ENCODE measurements at regions of chr13 and their contacts with region 1.

Region 1: GRCh38 chr13:23752111-23753001 is 136.8 kb downstream of the MIPEP start:
- DNase-seq: no peak
- H3K4me3 ChIP-seq: no peak overlapping the region
- H3K27ac ChIP-seq: no peak overlapping the region
- H3K4me1 ChIP-seq: peaks cover 13% of the 10 kb centered on the region
- H3K27me3 ChIP-seq: no peaks in the 10 kb centered on the region
- CTCF ChIP-seq: no peak
- POLR2A ChIP-seq: no peak

Region 2: DNA sequence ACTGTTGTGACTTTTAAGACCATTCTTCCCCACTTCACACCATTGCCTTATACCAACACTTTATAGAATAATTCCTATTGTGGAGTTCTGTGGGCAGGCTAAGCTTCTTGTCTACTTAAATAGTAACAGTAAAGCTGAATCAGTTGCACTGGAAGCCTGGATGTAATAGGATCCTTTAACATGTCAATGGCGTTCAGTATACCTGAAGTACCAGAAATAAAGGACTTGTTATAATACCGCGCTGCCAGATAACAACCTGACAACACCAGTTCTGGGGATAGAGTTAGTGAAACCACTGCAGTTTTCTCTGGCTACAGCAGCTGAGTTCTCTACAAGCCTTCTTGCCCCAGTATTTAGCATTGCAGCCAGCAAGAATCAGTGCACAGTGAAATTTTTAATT is 234.1 kb before region 1 on chr13:
- CTCF ChIA-PET with region 1: no interaction called
- POLR2A ChIA-PET with region 1: no interaction called
- dilution Hi-C with region 1: no loop called
- intact Hi-C with region 1: no loop called
- DNase-seq: no peak
- H3K4me3 ChIP-seq: no peak overlapping the region
- H3K27ac ChIP-seq: no peak overlapping the region
- H3K4me1 ChIP-seq: no peaks in the 10 kb centered on the region
- H3K27me3 ChIP-seq: peaks cover 3 to 4% of the 10 kb centered on the region in 2 experiments
- CTCF ChIP-seq: no peak
- POLR2A ChIP-seq: no peak

Region 3: GRCh38 chr13:23741879-23742510 is 10.4 kb before region 1 on chr13:
- CTCF ChIA-PET with region 1: interaction called, 21 read pairs
- POLR2A ChIA-PET with region 1: no interaction called
- dilution Hi-C with region 1: no loop called
- intact Hi-C with region 1: no loop called
- DNase-seq: no peak
- H3K4me3 ChIP-seq: no peak overlapping the region
- H3K27ac ChIP-seq: no peak overlapping the region
- H3K4me1 ChIP-seq: no peaks in the 10 kb centered on the region
- H3K27me3 ChIP-seq: no peaks in the 10 kb centered on the region
- CTCF ChIP-seq: peak; percentile 48 to 56
- POLR2A ChIP-seq: no peak

Region 4: GRCh38 chr13:23794267-23795161 is 42.2 kb after region 1 on chr13:
- CTCF ChIA-PET with region 1: interaction called, 3 read pairs
- POLR2A ChIA-PET with region 1: no interaction called
- dilution Hi-C with region 1: no loop called
- intact Hi-C with region 1: loop called (anchors 1 kb)
- DNase-seq: peak; percentile 91
- H3K4me3 ChIP-seq: peak overlapping the region in 1 of 3 experiments; percentile 47
- H3K27ac ChIP-seq: peak overlapping the region; percentile 85
- H3K4me1 ChIP-seq: peaks cover 22% of the 10 kb centered on the region
- H3K27me3 ChIP-seq: no peaks in the 10 kb centered on the region
- CTCF ChIP-seq: no peak
- POLR2A ChIP-seq: peak; percentile 28